ENCODE measurements at regions of chr1 and their contacts with region 1.

Region 1: GRCh38 chr1:176374967-176375569 is 87.9 kb upstream of the PAPPA2 start:
- DNase-seq: peak in 8 of 9 experiments; percentile 19 to 55 (median 42)
- ATAC-seq: no peak
- H3K4me3 ChIP-seq: no peak overlapping the region
- H3K4me3 Mint-ChIP-seq: no peak overlapping the region
- H3K27ac ChIP-seq: no peak overlapping the region
- H3K27ac Mint-ChIP-seq: no peak overlapping the region
- H3K4me1 ChIP-seq: no peaks in the 10 kb centered on the region
- H3K4me1 Mint-ChIP-seq: no peaks in the 10 kb centered on the region
- H3K27me3 ChIP-seq: no peaks in the 10 kb centered on the region
- H3K27me3 Mint-ChIP-seq: peaks cover 11% of the 10 kb centered on the region
- CTCF ChIP-seq: peak; percentile 55

Region 2: DNA sequence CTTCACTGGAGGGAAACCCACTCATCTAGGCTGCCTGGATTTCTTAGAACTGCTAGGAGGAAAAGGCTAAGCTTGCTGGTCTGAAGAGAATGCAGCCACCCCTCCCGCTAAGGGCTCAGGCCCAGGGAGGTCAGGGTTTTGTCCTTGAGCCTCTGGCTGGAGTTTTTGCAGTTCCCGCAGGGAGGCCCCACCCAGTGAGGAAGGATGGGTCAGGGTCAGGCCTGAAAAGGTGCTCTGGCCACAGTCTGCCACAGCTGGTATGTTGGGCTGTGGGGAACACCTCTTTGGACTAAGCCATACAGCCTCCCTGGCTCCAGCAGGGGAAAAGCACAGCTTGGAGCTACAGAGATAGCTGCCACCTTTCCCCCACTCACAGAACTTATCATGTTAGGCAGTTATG is 16.6 kb after region 1 on chr1:
- CTCF ChIA-PET with region 1: no interaction called
- POLR2A ChIA-PET with region 1: no interaction called
- intact Hi-C with region 1: no loop called
- DNase-seq: no peak
- ATAC-seq: no peak
- H3K4me3 ChIP-seq: no peak overlapping the region
- H3K4me3 Mint-ChIP-seq: no peak overlapping the region
- H3K27ac ChIP-seq: no peak overlapping the region
- H3K27ac Mint-ChIP-seq: no peak overlapping the region
- H3K4me1 ChIP-seq: no peaks in the 10 kb centered on the region
- H3K4me1 Mint-ChIP-seq: no peaks in the 10 kb centered on the region
- H3K27me3 ChIP-seq: no peaks in the 10 kb centered on the region
- H3K27me3 Mint-ChIP-seq: no peaks in the 10 kb centered on the region
- CTCF ChIP-seq: no peak

Region 3: GRCh38 chr1:177948336-177948972 is 1573.4 kb after region 1 on chr1:
- CTCF ChIA-PET with region 1: no interaction called
- POLR2A ChIA-PET with region 1: no interaction called
- intact Hi-C with region 1: loop called in 1 of 2 experiments (anchors 5 kb)
- DNase-seq: peak in 2 of 9 experiments; percentile 13 to 17
- ATAC-seq: no peak
- H3K4me3 ChIP-seq: no peak overlapping the region
- H3K4me3 Mint-ChIP-seq: no peak overlapping the region
- H3K27ac ChIP-seq: no peak overlapping the region
- H3K27ac Mint-ChIP-seq: no peak overlapping the region
- H3K4me1 ChIP-seq: no peaks in the 10 kb centered on the region
- H3K4me1 Mint-ChIP-seq: no peaks in the 10 kb centered on the region
- H3K27me3 ChIP-seq: no peaks in the 10 kb centered on the region
- H3K27me3 Mint-ChIP-seq: peaks cover 2% of the 10 kb centered on the region
- CTCF ChIP-seq: no peak

Measured in CD8-positive, alpha-beta T cell (primary cell).